ENCODE measurements at regions of chr17 and their contacts with region 1.

Region 1: DNA sequence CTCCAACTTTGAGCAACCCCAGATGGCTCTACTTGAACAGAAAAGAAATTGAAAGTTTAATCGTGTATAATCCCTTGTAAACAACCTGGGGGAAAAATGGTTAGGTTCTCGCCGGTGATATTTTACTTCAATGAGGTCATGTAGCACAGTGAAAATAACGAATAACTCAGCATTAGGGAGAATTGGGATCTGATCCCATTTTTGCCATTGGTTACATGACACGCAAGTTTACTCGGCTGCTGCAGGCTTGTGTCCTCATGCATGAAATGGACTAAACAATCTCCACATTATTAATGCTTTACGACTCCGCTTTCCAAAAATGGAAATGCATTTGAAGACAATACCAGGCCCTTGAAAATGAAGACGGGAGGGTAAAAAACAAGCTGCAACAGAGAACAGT is 45.5 kb upstream of the LRRC37A3 start:
- DNase-seq: no peak
- H3K4me3 ChIP-seq: no peak overlapping the region
- H3K27me3 ChIP-seq: no peaks in the 10 kb centered on the region
- CTCF ChIP-seq: no peak

Region 2: DNA sequence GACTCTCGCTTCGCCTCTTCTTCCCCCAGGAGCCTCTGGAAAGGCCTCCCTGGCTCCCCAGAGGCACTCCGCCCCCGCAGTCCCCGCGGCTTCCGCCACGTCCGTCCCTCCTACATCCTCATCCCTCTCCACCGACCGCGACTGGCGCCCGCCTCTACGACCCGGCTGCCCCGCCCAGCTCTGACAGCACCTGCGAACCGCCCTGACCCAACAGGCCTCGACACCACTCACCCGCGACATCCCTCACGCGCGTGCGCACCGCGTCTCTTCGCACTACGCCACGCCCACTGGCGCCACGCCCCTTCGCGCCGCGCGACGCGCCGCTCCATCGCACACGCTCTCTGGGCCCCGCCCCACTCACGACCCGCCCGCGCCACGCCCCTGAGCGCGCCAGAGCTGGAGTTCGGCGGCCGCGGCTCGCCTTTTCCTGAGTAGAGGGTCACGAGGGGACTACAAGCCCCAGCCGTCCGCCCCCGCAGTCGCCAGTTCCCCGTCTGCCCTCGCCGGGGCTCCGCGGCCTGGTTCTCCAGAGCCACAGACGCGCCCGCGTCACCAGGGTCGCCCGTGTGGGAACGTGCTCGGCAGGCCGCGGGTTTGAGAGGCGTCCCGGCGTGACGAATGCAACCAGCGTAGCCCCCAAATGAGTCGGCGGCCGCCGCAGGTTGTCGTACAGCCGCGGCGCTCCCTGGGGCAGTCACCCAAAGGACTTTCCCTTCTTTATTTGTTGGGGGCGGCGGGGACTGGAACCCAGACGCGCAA is 10.7 kb after region 1 on chr17:
- CTCF ChIA-PET with region 1: interaction called, 12 read pairs
- POLR2A ChIA-PET with region 1: no interaction called
- DNase-seq: peak; percentile 76
- H3K4me3 ChIP-seq: peak overlapping the region; percentile 88
- H3K27me3 ChIP-seq: no peaks in the 10 kb centered on the region
- CTCF ChIP-seq: no peak

Region 3: DNA sequence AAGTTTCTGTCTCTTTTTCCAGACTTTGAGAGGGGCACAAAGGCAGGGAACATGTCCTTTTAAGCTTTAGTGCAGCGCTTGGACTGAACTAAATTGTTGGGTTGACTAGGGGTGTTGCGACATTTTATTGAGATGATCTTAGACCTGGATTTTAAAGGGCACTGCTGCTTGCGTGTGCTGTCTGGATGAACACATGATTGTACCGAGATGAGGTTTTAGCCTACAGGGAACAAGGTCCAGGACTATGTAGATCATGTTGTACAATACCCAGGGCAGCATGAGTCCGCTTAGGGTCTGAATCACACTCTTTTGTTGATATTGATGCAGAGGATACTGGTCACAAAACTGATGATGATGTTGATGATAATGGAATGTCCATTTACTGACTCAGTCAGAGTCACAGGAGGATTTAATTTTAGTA is 167.2 kb after region 1 on chr17:
- CTCF ChIA-PET with region 1: no interaction called
- POLR2A ChIA-PET with region 1: no interaction called
- DNase-seq: peak; percentile 89
- H3K4me3 ChIP-seq: no peak overlapping the region
- H3K27me3 ChIP-seq: peaks cover 3% of the 10 kb centered on the region
- CTCF ChIP-seq: no peak